ENCODE measurements at regions of chr16 and their contacts with region 1.

Region 1: GRCh38 chr16:17416461-17417311 is 54.1 kb downstream of the XYLT1 start:
- DNase-seq: peak; percentile 40
- H3K4me3 Mint-ChIP-seq: peak overlapping the region; percentile 82
- H3K27ac Mint-ChIP-seq: peak overlapping the region; percentile 97
- H3K4me1 Mint-ChIP-seq: peaks cover 46% of the 10 kb centered on the region
- H3K27me3 Mint-ChIP-seq: no peaks in the 10 kb centered on the region

Region 2: DNA sequence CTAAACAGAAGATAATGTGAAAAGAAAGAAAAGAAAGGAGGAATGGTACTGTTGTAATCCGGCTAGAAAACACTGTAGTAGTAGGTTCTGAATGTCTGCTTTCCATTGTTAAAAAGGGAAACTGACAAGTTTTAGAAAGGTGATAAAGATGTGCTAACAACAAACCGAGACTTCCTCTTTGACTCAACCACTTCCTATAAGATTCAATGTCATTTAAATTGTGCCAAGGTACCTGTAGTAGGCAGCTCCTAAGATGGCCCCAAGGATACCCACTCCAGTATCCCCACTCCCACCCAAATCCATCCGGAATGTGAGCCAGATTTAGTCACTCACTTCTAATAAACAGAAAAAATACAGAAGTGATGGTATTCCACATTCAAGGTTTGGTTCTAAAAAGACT is 22.9 kb after region 1 on chr16:
- intact Hi-C with region 1: loop called (anchors 2 kb)
- DNase-seq: no peak
- H3K4me3 Mint-ChIP-seq: no peak overlapping the region
- H3K27ac Mint-ChIP-seq: peak overlapping the region; percentile 62
- H3K4me1 Mint-ChIP-seq: peaks cover 34% of the 10 kb centered on the region
- H3K27me3 Mint-ChIP-seq: no peaks in the 10 kb centered on the region

Region 3: GRCh38 chr16:17590719-17591654 is 174.3 kb after region 1 on chr16:
- intact Hi-C with region 1: loop called (anchors 1 kb)
- DNase-seq: peak; percentile 25
- H3K4me3 Mint-ChIP-seq: no peak overlapping the region
- H3K27ac Mint-ChIP-seq: peak overlapping the region; percentile 65
- H3K4me1 Mint-ChIP-seq: no peaks in the 10 kb centered on the region
- H3K27me3 Mint-ChIP-seq: peaks cover 3% of the 10 kb centered on the region

Region 4: GRCh38 chr16:17658881-17659280 is 242.2 kb after region 1 on chr16:
- intact Hi-C with region 1: no loop called
- DNase-seq: no peak
- H3K4me3 Mint-ChIP-seq: no peak overlapping the region
- H3K27ac Mint-ChIP-seq: no peak overlapping the region
- H3K4me1 Mint-ChIP-seq: no peaks in the 10 kb centered on the region
- H3K27me3 Mint-ChIP-seq: peaks cover 5% of the 10 kb centered on the region

Measured in activated T-helper 1 cell treated with anti-CD3 and anti-CD28 coated beads, Interleukin-12 subunit alpha, Interleukin-12 subunit beta, Interleukin-2, Interleukin-4 antibody, amounts not matched to agents 30 ng/mL and 10 ng/mL and 1 ng/mL, durations not matched to agents 14 hours and 24 hours and 36 hours (primary cell).